RWPE1 (cell line): ENCODE measurements at regions of chr15 and their contacts with region 1.

Region 1: DNA sequence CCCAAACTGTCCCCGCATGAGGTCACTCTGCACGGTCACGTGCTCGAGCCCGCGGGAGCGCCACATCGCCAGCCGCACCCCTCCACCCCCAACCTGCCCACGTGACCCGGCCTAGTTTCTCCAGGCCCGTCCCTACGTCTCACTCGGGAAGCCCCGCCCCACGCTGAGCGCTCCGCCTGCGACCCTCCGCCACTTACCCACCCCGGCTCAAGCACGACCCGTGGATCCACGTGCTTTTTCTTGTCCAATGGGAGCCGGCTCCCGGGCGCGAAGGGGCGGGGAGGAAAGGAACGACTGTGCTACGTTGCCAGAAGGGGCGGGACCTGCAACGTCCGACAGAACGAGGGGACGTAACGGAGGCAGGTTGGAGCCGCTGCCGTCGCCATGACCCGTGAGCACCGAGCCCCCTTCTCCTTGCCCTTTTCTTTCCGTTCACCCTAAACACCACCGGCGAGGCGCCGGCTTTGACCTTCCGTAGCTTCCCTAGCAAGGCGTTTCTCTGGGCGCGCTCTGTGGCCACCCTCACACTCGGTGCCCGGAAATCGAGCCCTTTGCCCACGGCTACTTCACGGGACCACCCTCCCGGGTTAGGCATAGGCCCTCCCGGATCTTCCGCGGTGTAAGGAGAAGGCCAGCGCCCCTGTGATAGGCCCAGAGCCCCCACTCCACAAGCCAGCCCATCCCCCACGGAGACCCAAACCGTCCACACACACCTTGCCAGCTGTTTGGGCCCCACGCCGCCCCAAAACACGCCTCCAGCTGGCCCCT is at the start of gene SERF2:
- DNase-seq: peak; percentile 100
- H3K27ac ChIP-seq: peak within 1 kb of the TSS; percentile 87
- CTCF ChIP-seq: no peak

Region 2: GRCh38 chr15:43723151-43723550 is 69.0 kb before region 1 on chr15:
- CTCF ChIA-PET with region 1: no interaction called
- POLR2A ChIA-PET with region 1: no interaction called
- DNase-seq: no peak
- H3K27ac ChIP-seq: no peak overlapping the region
- CTCF ChIP-seq: no peak

Region 3: DNA sequence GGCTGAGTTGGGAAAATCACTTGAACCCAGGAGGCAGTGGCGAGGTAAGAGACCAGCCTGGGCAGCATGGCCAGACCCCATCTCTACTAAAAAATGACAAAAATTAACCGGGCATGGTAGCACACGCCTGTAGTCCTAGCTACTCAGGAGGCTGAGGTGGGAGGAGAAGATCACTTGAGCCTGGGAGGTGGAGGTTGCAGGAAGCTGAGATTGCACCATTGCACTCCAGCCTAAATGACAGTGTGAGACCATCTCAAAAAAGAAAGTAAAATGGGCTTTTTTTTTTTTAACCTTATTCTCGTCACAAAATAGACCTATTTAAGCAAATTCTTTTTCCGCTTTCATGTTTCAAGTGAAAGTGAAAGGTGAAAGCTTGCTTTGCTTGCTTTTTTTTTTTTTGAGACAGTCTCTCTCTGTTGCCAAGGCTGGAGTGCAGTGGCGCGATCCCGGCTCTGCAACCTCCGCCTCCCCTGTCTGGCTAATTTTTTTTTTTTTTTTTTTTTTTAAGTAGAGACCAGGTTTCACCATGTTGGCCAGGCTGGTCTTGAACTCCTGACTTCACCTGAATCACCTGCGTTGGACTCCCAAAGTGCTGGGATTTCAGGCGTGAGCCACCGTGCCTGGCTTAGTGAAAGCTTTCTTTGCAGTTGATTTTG is 42.4 kb before region 1 on chr15:
- CTCF ChIA-PET with region 1: no interaction called
- POLR2A ChIA-PET with region 1: no interaction called
- DNase-seq: no peak
- H3K27ac ChIP-seq: peak overlapping the region; percentile 61
- CTCF ChIP-seq: no peak

Region 4: DNA sequence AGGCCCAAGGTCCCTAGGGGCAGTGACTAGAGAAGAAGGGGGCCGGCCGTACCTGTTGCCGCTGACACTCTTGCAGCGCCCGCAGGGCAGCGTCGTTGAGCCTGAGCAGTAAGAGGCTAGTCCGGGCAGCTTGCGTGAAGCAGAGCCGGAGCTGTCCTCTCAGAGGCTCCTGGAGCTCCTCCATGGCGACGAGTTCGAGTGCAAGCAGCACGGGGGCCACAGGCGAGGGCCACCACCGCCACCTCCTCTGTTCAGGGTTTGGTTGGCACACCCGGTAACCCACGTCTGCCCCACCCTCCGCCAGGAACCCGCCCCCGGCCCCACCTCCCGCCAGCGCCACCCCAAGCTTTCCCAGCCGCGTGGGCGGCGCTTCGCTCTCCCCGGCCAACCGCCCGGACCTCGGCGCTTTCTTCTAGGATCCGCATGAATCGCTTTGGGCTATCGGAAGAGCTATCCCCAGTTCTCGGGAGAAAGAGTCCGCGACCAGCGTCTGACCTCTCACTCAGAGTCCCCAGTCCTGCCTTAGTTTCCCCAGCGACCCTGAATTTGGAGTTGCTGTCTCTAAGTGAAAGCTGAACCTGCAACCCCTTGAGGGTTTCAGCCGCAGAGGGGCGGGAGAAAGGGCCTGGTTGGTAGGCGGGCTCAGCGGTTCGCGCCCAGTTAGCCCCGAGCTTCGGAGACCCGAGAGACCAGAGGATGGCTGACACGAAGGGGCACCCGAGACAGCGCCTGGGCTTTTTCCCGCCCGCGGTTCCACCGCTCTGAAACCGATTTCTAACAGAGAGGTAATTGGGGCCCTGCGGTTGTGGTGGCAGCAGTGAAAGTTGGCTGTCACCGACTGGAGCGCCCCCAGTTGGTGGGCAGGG is 15.2 kb before region 1 on chr15 and contains the start of gene ELL3:
- CTCF ChIA-PET with region 1: interaction called, 4 read pairs
- POLR2A ChIA-PET with region 1: interaction called, 10 read pairs
- DNase-seq: peak; percentile 83
- H3K27ac ChIP-seq: peak within 1 kb of the TSS; percentile 93
- CTCF ChIP-seq: peak; percentile 95

Region 5: GRCh38 chr15:43903864-43904290 is 111.7 kb after region 1 on chr15:
- CTCF ChIA-PET with region 1: no interaction called
- POLR2A ChIA-PET with region 1: no interaction called
- DNase-seq: peak; percentile 77
- H3K27ac ChIP-seq: no peak overlapping the region
- CTCF ChIP-seq: peak; percentile 95

Region 6: GRCh38 chr15:44698641-44699040 is 906.5 kb after region 1 on chr15:
- CTCF ChIA-PET with region 1: no interaction called
- POLR2A ChIA-PET with region 1: no interaction called
- DNase-seq: no peak
- H3K27ac ChIP-seq: no peak overlapping the region
- CTCF ChIP-seq: no peak